Activated naive CD4-positive, alpha-beta T cell treated with anti-CD3 and anti-CD28 coated beads for 36 hours (primary cell): ENCODE measurements at regions of chr20 and their contacts with region 1.

Region 1: DNA sequence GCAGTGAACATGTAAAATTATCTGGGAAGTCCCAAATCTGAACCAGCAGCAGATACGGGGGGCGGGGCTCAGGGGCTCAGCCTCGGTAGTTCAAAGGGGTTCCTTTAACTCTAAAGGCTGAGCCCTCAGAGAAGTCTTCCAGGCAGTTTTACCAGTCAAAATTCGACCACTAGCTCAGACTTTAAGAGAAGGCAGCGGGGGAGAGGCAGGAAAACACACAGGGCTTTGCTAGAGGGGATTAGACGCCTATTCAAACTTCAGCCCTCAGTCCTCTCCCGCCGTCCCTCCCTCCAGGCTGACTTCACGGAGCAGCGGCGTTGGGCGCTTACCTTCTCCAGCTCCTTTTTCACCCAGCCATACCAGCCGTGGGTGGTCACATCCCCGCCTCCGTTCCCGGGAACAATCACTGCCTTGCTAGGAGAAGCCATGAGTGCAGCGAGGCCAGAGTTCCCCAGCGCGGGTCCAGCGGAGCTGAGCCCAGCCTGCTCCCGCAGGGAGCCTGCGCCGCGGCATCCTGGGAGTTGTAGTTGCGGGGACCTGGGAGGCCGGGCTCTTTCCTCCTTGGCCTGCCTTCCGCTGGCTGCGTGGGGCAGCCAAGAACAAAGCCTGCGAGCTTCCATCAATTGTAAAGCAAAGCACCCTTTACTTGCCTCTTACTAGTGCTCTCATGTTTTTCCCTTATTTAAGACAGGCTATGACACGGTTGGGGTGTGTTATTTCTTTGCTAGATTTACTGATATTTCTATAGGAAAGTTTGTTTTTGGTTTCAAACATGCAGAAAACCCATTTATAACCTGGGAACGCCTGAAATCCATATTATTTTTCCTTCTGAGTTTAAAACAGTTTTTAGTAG is at the start of gene RBBP9:
- DNase-seq: peak; percentile 88
- H3K4me3 Mint-ChIP-seq: peak within 1 kb of the TSS; percentile 91
- H3K27ac Mint-ChIP-seq: peak within 1 kb of the TSS; percentile 84
- H3K4me1 Mint-ChIP-seq: peaks cover 11% of the 10 kb centered on the region
- H3K27me3 Mint-ChIP-seq: no peaks in the 10 kb centered on the region
- total RNA-seq, gene RBBP9: 17.3 to 18.1 TPM

Region 2: DNA sequence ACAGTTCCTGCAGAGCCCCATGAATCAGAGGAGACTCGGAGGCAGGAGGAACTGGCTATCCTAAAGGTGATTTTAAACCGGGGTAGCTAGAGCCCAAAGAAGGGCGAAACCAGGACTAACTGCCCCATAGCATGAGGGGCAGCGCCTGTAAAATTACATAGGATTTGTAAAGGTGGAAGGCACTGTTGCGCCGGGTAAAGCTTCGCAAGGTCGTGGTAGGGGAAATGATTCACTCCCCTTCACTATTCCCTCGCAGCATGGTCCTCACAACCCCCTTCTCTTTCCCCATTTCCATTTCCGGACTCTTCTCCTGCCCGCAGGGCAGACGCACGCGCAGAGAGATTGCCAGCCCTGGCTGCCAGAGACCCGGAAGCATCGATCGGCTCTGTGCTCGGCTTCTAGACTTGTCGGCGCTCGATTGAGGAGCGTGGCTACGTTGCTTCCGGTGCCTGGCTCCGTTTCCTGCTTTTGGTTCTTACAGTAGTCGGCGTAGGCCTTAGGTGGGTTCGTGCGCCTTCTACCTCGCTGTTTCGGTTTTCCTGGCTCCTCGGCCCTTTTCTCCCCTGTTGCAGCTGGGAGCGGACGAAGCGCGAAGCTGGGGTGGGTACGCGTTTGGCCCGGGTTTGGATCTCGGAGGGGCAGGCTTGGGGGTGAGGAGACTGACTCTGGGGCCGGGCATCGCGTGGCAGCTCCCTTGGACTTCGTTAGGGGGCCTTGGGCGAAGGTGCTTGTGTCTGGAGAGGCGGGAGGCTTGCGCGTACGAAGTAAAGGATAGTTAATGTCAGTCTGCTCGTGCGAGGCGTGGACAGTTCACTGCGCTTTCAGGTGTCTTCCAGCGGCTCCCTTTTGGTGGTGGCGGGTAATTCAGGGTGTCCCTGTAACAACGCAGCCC is 1767.2 kb before region 1 on chr20 and contains the start of gene SNRPB2:
- CTCF ChIA-PET with region 1: no interaction called
- intact Hi-C with region 1: loop called (anchors 5 kb)
- DNase-seq: peak; percentile 95
- H3K4me3 Mint-ChIP-seq: peak within 1 kb of the TSS; percentile 99
- H3K27ac Mint-ChIP-seq: peak within 1 kb of the TSS; percentile 98
- H3K4me1 Mint-ChIP-seq: peaks cover 45% of the 10 kb centered on the region
- H3K27me3 Mint-ChIP-seq: peaks cover 6% of the 10 kb centered on the region
- total RNA-seq, gene SNRPB2: 93.1 to 99.8 TPM

Region 3: DNA sequence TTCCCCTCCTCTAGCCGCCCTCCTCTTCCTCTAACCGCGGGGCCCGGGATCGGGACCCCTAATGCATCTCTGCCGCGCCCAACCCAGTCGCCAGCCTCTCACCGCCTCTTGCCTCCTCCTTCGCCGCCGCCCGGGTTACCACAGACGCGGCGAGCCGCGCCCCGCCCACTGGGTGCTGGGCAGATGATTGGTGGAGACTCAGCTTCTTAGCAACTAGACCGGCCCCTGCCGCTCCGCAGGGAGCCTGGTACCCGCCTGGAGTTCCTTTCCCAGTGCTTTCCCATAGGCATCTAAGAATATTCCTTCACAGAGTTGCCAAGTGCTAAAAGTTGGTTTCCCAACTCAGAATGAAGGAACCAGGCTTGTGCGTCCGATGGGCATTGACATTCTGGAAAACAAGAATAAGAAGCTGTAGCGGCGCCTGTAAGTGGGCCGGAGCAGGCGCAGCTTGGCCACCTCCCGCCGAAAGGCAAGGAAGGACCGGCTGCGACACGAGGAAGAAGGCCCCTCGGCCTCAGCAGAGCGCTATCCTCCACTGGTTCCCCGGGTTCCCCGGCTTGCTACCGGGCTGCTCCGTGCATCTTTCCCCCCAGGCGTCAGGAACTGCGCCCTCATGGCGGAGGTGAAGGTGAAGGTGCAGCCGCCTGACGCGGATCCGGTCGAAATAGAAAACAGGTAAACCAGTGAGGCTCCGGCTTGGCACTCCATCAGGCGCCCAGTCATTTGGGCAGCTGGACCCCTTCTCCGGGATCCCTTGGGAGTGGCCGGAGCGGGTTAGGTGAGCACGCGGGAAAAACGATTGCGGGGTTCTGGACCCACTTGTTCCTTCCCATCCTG is 29.9 kb before region 1 on chr20 and contains the starts of genes DZANK1 and POLR3F:
- CTCF ChIA-PET with region 1: interaction called, 7 read pairs
- intact Hi-C with region 1: loop called (anchors 1 kb)
- DNase-seq: peak; percentile 94
- H3K4me3 Mint-ChIP-seq: peak within 1 kb of the TSS; percentile 92
- H3K27ac Mint-ChIP-seq: peak within 1 kb of the TSS; percentile 84
- H3K4me1 Mint-ChIP-seq: peaks cover 32% of the 10 kb centered on the region
- H3K27me3 Mint-ChIP-seq: no peaks in the 10 kb centered on the region
- total RNA-seq, gene DZANK1: 0.79 to 0.94 TPM
- total RNA-seq, gene POLR3F: 7.0 to 8.3 TPM

Region 4: DNA sequence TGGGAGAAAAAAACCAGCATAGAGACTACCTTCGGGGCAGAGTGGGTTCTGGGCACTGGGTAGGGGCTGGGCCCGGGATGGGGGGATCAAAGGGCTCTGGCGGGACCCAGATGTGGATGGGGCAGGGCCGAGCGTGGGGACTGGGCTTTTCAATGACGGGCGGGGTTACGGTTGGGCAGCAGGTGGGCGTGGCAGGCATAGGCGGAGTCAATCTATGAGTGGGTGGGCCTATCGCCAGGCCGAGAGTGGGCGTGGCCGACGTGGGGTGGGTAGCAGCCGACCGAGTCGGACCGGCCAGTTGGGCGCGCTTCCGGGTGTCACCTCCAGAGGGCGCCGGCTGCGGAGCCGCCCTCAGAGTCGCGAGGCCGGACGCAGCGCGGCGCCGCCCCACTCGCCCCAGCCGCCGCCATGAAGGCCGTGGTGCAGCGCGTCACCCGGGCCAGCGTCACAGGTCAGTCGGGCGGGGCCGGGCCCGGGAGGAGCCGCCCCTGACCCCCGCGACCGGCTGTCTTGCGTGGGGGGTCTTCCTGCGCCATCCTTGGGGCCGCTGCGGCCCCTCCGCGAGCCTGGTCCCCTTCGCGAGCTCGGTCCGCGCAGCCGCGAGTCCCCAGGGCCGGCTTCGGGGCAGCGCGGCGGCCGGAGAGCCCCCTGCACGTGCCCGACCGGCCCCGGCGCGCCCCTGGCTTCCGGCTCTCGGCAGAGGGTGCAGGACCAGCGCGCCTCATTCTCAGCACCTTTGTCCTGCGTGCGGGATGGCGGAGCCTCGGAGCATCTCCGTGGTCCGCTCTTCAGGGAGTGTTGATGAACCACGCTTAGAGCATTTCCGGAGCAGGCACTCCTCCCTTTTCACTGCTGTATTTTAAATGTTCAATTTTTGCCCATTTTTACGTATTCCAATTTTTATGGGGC is 91.0 kb after region 1 on chr20 and contains the start of gene DTD1:
- CTCF ChIA-PET with region 1: interaction called, 3 read pairs
- intact Hi-C with region 1: loop called (anchors 2 kb)
- DNase-seq: peak; percentile 89
- H3K4me3 Mint-ChIP-seq: peak within 1 kb of the TSS; percentile 87
- H3K27ac Mint-ChIP-seq: peak within 1 kb of the TSS; percentile 59
- H3K4me1 Mint-ChIP-seq: peaks cover 23% of the 10 kb centered on the region
- H3K27me3 Mint-ChIP-seq: no peaks in the 10 kb centered on the region
- total RNA-seq, gene DTD1: 46.4 to 47.1 TPM